ENCODE measurements at regions of chr16 and their contacts with region 1.

Region 1: DNA sequence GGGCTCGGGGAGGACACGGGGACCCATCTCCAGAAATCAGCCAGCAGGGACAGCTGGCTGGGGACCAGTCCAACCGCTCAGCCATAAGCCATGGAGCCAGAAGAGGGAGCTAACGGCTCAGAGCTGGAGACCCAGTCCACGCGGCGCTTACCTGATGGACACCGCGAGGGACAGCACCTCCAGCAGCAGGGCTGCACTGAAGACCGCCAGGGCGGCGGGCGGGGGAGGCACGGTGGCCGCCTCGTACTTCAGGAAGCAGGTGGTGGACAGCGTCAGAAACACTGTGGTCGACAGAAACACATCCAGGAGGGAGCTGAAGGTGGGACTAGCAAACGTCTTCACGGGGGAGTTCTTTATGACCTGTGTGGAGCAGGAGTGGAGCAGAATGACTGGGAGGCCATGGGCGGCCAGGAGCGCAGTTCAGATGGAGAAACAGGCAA is 102.6 kb upstream of the CREBBP start:
- DNase-seq: peak; percentile 77
- H3K4me3 ChIP-seq: no peak overlapping the region
- H3K27ac ChIP-seq: no peak overlapping the region
- H3K4me1 ChIP-seq: no peaks in the 10 kb centered on the region
- H3K27me3 ChIP-seq: no peaks in the 10 kb centered on the region
- CTCF ChIP-seq: peak; percentile 65

Region 2: GRCh38 chr16:3734758-3735221 is 248.3 kb before region 1 on chr16:
- intact Hi-C with region 1: no loop called
- DNase-seq: no peak
- H3K4me3 ChIP-seq: no peak overlapping the region
- H3K27ac ChIP-seq: no peak overlapping the region
- H3K4me1 ChIP-seq: no peaks in the 10 kb centered on the region
- H3K27me3 ChIP-seq: no peaks in the 10 kb centered on the region
- CTCF ChIP-seq: no peak

Region 3: DNA sequence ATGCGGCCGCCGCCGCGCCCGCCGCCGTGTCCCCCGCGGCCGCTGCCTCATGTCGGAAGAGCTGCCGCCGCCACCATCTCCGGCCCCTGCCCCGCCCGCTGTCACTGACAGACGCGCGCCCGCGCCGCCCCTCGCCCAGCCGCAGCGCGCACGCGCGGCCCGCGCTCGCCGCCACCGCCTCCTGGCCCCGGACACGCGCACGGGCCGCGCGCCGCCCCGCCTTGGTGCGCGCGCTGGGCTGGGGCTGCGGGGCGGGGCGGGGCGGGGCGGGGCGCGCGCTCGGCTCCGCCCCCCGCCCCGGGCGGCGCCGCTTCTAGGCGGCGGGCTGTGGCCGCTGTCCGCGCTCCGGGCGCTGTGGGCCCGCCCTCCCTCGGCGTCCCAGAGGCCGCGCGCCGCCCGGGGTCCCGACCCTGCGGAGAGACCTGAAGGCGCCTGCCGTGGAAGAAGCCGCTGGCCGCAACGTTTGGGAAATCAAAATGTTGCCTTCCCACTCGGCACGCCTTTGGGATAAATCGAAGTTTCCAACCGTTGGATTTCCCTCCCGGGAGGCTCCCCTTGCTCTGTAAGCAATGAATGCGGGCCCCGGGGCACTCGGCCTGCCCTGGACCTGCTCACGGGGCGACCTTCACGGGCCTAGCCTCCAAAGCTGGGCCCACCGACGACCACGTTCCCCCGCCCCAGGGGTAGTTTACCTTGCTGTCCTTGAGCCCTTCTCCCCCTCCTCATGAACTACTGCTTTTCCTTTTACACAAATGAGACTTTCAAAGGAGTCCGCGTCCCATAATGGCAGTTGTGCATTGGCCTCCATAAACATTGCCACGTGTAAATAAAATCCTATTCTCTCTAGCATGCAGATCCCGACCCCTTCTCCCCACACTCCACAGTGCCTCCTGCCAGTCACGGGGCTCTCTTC is 133.5 kb after region 1 on chr16 and contains the start of gene ADCY9:
- intact Hi-C with region 1: loop called (anchors 10 kb)
- DNase-seq: peak; percentile 73
- H3K4me3 ChIP-seq: peak within 1 kb of the TSS; percentile 59
- H3K27ac ChIP-seq: peak within 1 kb of the TSS; percentile 47
- H3K4me1 ChIP-seq: peaks cover 8% of the 10 kb centered on the region
- H3K27me3 ChIP-seq: no peaks in the 10 kb centered on the region
- CTCF ChIP-seq: no peak
- total RNA-seq, gene ADCY9: 23.8 to 25.6 TPM

Region 4: GRCh38 chr16:4183237-4184036 is 200.3 kb after region 1 on chr16:
- intact Hi-C with region 1: loop called (anchors 10 kb)
- DNase-seq: peak; percentile 91
- H3K4me3 ChIP-seq: peak overlapping the region; percentile 75
- H3K27ac ChIP-seq: peak overlapping the region; percentile 92
- H3K4me1 ChIP-seq: no peaks in the 10 kb centered on the region
- H3K27me3 ChIP-seq: no peaks in the 10 kb centered on the region
- CTCF ChIP-seq: no peak

Measured in colonic mucosa (tissue), 4 donors.